ENCODE measurements at regions of chr16 and their contacts with region 1.

Region 1: GRCh38 chr16:21300309-21301167 is 22.4 kb upstream of the CRYM start:
- DNase-seq: peak; percentile 100
- ATAC-seq: peak; percentile 89
- H3K4me3 ChIP-seq: peak overlapping the region; percentile 66 to 87
- H3K27ac ChIP-seq: peak overlapping the region; percentile 73
- H3K4me1 ChIP-seq: peaks cover 8% of the 10 kb centered on the region; the same call in 1 of the 2 replicates
- H3K27me3 ChIP-seq: no peaks in the 10 kb centered on the region
- CTCF ChIP-seq: peak; percentile 96

Region 2: DNA sequence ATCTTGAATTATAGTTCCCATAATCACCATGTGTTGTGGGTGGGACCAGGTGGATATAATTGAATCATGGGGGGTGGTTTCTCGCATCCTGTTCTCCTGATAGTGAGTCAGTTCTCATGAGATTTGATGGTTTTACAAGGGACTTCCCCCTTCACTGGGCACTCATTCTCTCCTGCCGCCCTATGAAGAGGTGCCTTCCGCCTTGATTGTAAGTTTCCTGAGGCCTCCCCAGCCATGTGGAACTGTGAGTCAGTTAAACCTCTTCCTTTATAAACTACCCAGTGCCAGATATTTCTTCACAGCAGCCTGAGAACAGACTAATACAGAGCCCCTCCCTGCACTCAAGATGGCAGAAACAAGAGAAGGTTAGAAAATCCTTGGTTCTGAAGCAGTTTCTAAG is 115.7 kb before region 1 on chr16:
- CTCF ChIA-PET with region 1: interaction called, 22 read pairs
- POLR2A ChIA-PET with region 1: no interaction called
- in situ Hi-C with region 1: loop called (anchors 25 kb)
- intact Hi-C with region 1: loop called (anchors 1 kb)
- DNase-seq: no peak
- ATAC-seq: no peak
- H3K4me3 ChIP-seq: no peak overlapping the region
- H3K27ac ChIP-seq: no peak overlapping the region
- H3K4me1 ChIP-seq: 0 out of 2 replicates have a peak, but pooled peaks cover 4% of the 10 kb centered on the region
- H3K27me3 ChIP-seq: no peaks in the 10 kb centered on the region
- CTCF ChIP-seq: no peak

Region 3: DNA sequence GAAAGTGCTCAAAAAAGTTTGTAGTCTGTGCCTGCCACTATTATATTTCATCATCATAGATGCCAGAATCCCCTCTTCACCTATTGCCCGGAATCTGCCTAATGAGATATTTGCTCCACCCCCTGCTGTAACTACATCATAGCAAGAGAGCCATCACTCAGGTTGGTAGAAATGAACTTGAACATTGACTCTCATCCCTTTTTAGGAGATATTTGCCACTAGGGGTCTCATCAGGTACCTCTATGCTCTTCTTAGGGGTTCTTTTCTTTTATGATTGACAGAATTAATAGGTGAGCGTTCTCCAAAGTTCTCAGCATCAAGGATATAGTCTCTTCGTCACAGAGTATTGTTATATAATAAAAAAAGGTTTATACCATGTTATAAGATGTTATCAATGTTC is 47.1 kb before region 1 on chr16:
- CTCF ChIA-PET with region 1: interaction called, 17 read pairs
- POLR2A ChIA-PET with region 1: no interaction called
- in situ Hi-C with region 1: no loop called
- intact Hi-C with region 1: no loop called
- DNase-seq: no peak
- ATAC-seq: no peak
- H3K4me3 ChIP-seq: no peak overlapping the region
- H3K27ac ChIP-seq: no peak overlapping the region
- H3K4me1 ChIP-seq: no peaks in the 10 kb centered on the region
- H3K27me3 ChIP-seq: 0 out of 2 replicates have a peak, but pooled peaks cover 7% of the 10 kb centered on the region
- CTCF ChIP-seq: no peak

Measured in Panc1 (cell line).